Left colon (tissue), 2 donors: ENCODE measurements at regions of chr10 and their contacts with region 1.

Region 1: DNA sequence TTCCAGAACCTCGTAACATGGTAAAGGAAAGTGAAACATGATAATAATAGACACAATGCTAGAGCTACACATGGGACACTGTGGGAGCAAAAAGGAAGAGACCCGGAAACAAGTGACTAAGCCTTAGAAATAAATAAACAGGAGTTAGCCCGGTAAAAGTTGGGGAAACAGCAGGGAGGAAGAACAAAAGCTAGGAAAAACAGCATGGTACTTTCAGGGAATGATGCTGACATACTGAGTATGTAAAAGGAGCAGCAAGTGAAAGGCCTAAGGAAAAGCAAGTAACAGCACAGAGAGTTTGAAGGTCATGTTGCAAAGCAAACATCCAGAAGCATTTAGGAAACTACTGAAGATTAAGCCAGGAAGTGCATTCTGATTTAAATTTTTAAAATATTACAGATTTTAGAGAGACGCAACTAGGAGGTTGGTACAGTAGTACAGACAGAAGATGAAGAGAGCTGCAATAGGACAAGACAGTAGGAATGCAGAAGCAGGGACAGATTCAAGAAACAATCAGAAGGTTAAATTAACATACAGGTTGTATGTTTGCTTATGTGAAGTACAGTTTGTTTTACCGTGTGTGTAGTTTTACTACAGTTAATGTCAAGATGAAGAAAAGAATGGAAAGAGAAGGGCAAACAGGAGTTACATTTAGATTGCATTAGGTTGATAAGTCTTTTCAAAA is 63.7 kb downstream of the ARHGAP12 start:
- DNase-seq: no peak
- ATAC-seq: peak; percentile 66

Region 2: DNA sequence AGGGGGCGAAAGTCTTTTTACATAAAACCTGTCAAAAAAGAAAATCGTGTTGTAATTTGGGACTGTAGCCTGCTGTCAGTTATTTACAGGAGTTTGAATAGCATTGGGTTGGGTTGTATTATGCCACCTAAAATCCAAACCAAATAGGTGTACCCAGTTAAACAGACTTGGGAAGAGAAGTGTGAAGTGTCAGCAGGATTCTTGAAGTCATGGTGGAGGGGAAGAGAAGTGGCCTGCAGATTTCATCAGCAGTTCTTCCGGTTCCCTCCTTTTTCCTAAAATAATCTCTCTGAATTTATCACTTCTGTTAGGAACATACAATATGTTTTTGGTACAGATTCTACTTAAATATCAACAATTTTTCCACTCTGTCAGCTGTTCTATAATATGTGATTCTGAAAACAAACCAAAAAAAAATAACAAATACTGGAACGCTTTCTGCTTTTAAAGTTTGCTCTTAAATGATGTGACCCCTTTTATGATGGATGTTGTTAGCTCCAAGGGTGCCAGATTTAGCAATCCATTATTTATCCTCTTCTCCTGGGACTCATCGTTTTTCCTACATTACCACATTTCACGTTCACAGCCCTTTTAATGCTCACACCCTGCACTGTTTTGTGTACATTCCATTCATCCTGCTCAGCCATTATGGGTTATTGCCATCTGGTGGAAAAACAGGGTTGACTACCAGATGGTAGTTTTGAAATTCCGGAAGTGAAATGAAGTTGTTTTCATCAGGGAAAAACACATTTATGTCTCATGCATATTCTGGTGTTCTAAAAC is 82.4 kb after region 1 on chr10:
- intact Hi-C with region 1: loop called in 1 of 2 experiments (anchors 5 kb)
- DNase-seq: no peak
- ATAC-seq: peak; percentile 91

Region 3: GRCh38 chr10:32005050-32005449 is 140.1 kb after region 1 on chr10:
- intact Hi-C with region 1: loop called in 1 of 2 experiments (anchors 10 kb)
- DNase-seq: peak in 1 of 2 donors; percentile 37
- ATAC-seq: peak; percentile 66